ENCODE measurements at regions of chr20 and their contacts with region 1.

Region 1: GRCh38 chr20:50070991-50071888 is 41.7 kb downstream of the UBE2V1 start:
- DNase-seq: peak; percentile 98
- ATAC-seq: peak; percentile 100
- H3K4me3 Mint-ChIP-seq: peak overlapping the region; percentile 48
- H3K27ac Mint-ChIP-seq: no peak overlapping the region
- H3K4me1 Mint-ChIP-seq: peaks cover 4% of the 10 kb centered on the region
- H3K27me3 Mint-ChIP-seq: peaks cover 7% of the 10 kb centered on the region
- CTCF ChIP-seq: peak; percentile 79

Region 2: DNA sequence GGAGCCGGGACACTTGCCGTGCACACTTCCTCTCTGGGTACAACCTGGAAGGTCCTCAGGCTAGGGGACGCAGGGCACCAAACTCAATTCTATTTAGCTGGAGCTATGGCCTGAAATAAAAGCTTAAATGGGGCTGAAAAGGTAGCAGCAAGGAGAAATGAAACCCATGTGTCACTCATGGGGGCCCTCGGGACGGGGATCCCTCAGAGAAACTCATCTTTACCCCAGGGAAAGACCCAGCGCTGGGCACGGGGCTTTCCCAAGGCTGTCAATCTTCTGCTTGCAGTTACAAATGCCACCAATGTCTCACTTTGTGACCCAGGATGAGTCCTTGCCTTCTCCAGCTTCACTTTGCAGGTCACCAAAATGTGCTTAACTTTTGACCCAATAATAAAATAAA is 71.9 kb before region 1 on chr20:
- CTCF ChIA-PET with region 1: interaction called, 17 read pairs
- POLR2A ChIA-PET with region 1: interaction called, 3 read pairs
- intact Hi-C with region 1: no loop called
- DNase-seq: peak; percentile 68
- ATAC-seq: peak; percentile 99
- H3K4me3 Mint-ChIP-seq: peak overlapping the region; percentile 44
- H3K27ac Mint-ChIP-seq: peak overlapping the region; percentile 14
- H3K4me1 Mint-ChIP-seq: peaks cover 24% of the 10 kb centered on the region
- H3K27me3 Mint-ChIP-seq: peaks cover 4% of the 10 kb centered on the region
- CTCF ChIP-seq: no peak

Region 3: DNA sequence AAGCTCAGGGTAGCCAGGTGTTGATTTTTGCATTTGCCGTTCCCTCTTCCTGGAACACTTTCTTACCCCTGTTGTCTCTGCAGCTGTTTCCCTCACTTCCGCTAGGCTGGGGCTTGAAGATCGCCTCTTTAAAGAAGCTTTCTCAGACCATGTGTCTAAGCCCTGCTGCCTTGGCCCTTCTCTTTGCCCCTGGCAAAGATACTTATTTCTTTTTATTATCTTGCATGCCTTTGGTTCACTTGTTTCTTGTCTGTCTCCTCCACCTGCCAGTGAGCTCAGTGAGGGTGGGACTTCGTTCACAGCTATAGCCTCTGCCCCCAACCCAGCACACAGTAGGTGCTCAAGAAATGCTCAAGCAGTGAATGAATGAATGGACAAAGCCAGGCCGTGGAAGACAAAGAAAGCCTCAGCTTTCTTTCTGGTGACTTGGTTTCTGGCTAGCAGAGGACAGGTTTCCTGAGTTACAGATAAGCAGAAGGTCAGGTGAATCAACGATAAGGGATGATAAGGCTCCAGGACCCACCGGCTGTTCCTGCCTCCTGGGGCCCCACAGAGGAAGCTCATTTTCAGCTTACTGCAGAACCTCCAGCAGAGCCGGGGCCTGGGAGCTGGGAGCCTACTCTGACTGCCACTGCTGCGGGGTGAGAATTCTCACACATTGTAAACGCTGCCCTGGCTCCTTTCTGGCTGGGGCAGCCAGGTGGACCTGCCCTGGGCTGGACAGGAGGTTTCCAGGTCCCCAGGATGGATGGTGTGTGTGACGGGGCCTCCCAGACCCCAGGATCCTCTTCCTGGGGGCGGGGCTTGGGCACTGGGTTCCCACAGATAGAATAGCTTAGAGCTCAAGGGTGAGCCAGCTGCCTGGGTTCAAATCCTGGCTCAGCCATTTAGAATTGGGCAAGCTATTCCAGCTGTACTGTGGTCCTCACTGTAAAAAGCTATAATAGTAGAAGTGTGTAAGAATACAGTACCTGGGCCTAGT is 58.7 kb before region 1 on chr20:
- CTCF ChIA-PET with region 1: interaction called, 11 read pairs
- POLR2A ChIA-PET with region 1: no interaction called
- intact Hi-C with region 1: no loop called
- DNase-seq: no peak
- ATAC-seq: peak; percentile 81
- H3K4me3 Mint-ChIP-seq: no peak overlapping the region
- H3K27ac Mint-ChIP-seq: peak overlapping the region; percentile 75
- H3K4me1 Mint-ChIP-seq: peaks cover 16% of the 10 kb centered on the region
- H3K27me3 Mint-ChIP-seq: peaks cover 3% of the 10 kb centered on the region
- CTCF ChIP-seq: no peak

Region 4: GRCh38 chr20:50048420-50049166 is 22.6 kb before region 1 on chr20:
- CTCF ChIA-PET with region 1: interaction called, 10 read pairs
- POLR2A ChIA-PET with region 1: no interaction called
- intact Hi-C with region 1: loop called (anchors 2 kb)
- DNase-seq: peak; percentile 37
- ATAC-seq: peak; percentile 59
- H3K4me3 Mint-ChIP-seq: peak overlapping the region; percentile 5
- H3K27ac Mint-ChIP-seq: peak overlapping the region; percentile 9
- H3K4me1 Mint-ChIP-seq: peaks cover 39% of the 10 kb centered on the region
- H3K27me3 Mint-ChIP-seq: no peaks in the 10 kb centered on the region
- CTCF ChIP-seq: no peak

Region 5: DNA sequence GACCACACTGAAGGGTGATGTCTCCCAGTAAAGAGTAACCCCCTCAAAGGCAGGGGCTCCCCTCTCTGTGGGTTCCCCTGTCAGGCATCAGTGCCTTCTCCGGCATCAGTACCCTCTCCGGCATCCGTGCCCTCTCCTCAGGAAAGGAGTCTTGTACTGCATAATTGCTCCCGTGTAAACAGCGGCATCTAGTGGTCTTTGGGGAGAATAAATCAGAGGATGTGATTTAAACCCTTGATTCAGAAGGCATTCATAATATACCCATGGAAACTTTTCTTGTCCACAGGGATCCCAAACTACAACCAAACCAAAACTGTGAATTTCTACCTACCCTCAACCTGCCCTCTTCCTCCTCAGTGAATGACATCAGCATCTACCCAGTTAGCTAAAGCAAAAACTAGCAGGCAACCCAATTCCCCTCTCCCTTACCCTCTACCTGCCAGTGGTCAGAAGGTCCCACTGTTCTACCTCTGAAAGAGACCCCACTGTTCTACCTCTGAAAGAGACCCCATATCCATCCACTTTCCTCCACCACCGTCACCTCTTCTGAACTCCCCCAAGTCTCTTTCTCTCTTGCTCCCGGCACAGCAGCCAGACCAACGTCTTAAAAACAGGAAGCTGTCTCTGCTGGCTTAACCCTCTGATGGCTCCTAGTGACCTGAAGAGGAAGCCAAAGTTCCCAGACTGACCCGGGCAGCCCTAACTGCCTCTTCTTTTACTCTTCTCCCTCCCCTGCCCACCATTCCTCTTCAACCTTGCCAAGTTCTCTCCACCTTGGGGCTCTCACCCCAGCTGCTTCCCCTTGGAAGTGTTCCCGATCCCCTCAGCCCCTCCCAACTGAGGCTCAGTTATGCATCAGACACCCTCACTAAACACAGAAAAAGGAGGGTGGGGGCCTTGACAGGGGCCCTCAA is 14.5 kb after region 1 on chr20:
- CTCF ChIA-PET with region 1: interaction called, 67 read pairs
- POLR2A ChIA-PET with region 1: no interaction called
- intact Hi-C with region 1: no loop called
- DNase-seq: no peak
- ATAC-seq: peak; percentile 82
- H3K4me3 Mint-ChIP-seq: peak overlapping the region; percentile 83
- H3K27ac Mint-ChIP-seq: peak overlapping the region; percentile 55
- H3K4me1 Mint-ChIP-seq: peaks cover 14% of the 10 kb centered on the region
- H3K27me3 Mint-ChIP-seq: no peaks in the 10 kb centered on the region
- CTCF ChIP-seq: no peak

Region 6: DNA sequence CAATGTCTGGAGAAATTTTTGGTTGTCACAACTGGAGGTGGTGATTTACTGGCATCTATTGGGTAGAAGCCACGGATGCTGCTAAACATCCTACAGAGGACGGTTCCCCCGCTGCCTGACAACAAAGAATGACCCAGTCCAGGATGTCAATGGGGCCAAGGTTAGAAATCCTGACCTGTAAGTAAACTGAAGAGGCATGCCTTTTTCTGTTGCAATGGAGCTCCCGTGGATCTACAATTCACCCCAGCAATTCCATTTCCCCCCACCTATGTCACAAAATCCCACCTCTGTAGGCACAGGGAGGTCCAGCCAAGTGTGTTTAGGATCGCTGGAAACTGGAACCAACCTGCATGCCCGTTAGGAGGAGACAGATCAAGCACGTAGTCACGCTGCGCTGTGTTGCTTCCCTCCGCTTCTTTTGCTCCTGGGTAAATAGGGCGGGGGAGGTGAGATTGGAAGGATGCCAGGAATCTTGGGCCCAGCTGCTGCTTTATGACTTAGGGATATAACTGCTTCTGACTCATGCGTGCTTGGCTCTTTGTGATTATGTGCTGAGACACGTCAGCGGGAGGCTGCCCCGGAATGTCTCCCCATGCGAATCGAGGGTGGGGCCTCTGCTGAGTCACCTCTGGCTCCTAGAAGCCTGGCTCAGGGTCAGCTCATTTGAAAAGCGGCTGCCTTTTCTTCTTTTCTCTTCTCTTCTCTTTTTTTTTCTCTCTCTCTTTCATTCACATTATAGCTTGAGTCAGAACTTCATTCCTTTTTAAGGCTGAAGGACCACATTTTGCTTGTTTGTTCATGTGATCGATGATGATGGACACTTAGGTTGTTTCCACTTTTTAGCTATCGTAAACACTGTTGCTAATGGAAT is 94.7 kb after region 1 on chr20:
- CTCF ChIA-PET with region 1: interaction called, 12 read pairs
- POLR2A ChIA-PET with region 1: no interaction called
- intact Hi-C with region 1: loop called (anchors 1 kb)
- DNase-seq: peak; percentile 66
- ATAC-seq: peak; percentile 99
- H3K4me3 Mint-ChIP-seq: peak overlapping the region; percentile 68
- H3K27ac Mint-ChIP-seq: peak overlapping the region; percentile 61
- H3K4me1 Mint-ChIP-seq: peaks cover 14% of the 10 kb centered on the region
- H3K27me3 Mint-ChIP-seq: peaks cover 6% of the 10 kb centered on the region
- CTCF ChIP-seq: no peak

Region 7: GRCh38 chr20:50561379-50562078 is 490.3 kb after region 1 on chr20:
- CTCF ChIA-PET with region 1: no interaction called
- POLR2A ChIA-PET with region 1: no interaction called
- intact Hi-C with region 1: no loop called
- DNase-seq: no peak
- ATAC-seq: peak; percentile 78
- H3K4me3 Mint-ChIP-seq: peak overlapping the region; percentile 35
- H3K27ac Mint-ChIP-seq: peak overlapping the region; percentile 76
- H3K4me1 Mint-ChIP-seq: peaks cover 70% of the 10 kb centered on the region
- H3K27me3 Mint-ChIP-seq: no peaks in the 10 kb centered on the region
- CTCF ChIP-seq: no peak

Measured in activated B cell treated with CpG ODN at 0.5 μM for 24 hours (primary cell).